BJ (cell line): ENCODE measurements at regions of chr2 and their contacts with region 1.

Region 1: DNA sequence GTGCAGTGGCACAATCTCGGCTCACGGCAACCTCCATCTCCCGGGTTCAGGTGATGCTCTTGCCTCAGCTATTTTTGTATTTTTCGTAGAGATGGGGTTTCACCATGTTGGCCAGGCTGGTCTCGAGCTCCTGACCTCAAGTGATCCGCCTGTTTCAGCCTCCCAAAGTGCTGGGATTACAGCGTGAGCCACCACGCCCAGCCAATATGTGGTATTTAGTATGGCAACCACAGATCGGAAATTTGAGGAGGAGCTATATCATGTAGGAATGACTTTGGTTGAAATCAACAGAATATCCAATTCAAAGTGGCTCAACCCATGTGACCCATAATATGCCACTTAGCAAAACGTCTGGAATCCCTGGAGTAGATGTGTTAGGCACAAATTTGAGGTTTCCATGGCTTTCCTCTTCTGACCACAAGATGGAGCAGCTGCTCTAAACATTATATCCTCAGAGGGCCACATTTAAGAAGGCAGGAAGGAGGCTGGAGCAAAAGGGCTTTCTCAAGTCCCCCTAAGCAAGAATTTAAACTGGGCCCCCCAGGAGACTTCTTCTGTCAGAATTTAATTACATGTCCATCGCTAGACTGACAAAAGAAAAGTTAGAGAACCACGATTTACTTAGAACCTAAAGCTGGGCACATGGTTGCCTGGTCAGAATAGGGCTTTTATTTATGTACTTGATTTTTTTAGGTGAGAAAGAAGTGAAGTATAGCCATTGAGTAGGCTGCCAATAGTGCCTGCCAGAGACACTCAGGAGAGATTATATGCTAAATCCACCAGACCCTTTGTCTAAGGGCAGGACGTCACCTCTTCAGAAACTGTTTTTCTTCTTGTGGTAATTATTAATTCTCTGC is 49.6 kb upstream of the ITSN2 start:
- DNase-seq: no peak
- H3K4me3 ChIP-seq: no peak overlapping the region
- H3K27me3 ChIP-seq: no peaks in the 10 kb centered on the region
- CTCF ChIP-seq: peak; percentile 81

Region 2: GRCh38 chr2:24421668-24422067 is 11.7 kb after region 1 on chr2:
- CTCF ChIA-PET with region 1: interaction called, 17 read pairs
- POLR2A ChIA-PET with region 1: no interaction called
- DNase-seq: no peak
- H3K4me3 ChIP-seq: no peak overlapping the region
- H3K27me3 ChIP-seq: peaks cover 3% of the 10 kb centered on the region
- CTCF ChIP-seq: peak; percentile 55

Region 3: DNA sequence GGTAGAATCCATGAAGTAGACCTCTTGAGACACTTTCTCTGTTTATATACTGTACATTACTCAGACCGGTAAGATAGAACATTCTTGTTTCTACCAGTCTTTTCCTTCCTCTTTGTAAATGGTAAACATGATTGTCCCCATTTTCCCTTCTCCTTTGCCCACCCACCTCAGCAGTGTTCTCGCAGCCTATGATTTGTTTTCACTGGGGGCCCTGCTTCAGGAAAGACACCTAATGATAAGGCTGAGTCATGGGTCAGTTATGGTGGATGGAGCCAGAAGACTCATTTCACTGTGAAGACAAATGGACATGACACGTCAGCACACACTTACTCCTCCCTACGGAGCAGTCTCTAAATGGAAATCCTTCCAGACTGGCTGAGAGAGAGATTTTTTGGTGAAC is 407.0 kb after region 1 on chr2:
- CTCF ChIA-PET with region 1: interaction called, 20 read pairs
- POLR2A ChIA-PET with region 1: no interaction called
- DNase-seq: no peak
- H3K4me3 ChIP-seq: no peak overlapping the region
- H3K27me3 ChIP-seq: no peaks in the 10 kb centered on the region
- CTCF ChIP-seq: no peak

Region 4: DNA sequence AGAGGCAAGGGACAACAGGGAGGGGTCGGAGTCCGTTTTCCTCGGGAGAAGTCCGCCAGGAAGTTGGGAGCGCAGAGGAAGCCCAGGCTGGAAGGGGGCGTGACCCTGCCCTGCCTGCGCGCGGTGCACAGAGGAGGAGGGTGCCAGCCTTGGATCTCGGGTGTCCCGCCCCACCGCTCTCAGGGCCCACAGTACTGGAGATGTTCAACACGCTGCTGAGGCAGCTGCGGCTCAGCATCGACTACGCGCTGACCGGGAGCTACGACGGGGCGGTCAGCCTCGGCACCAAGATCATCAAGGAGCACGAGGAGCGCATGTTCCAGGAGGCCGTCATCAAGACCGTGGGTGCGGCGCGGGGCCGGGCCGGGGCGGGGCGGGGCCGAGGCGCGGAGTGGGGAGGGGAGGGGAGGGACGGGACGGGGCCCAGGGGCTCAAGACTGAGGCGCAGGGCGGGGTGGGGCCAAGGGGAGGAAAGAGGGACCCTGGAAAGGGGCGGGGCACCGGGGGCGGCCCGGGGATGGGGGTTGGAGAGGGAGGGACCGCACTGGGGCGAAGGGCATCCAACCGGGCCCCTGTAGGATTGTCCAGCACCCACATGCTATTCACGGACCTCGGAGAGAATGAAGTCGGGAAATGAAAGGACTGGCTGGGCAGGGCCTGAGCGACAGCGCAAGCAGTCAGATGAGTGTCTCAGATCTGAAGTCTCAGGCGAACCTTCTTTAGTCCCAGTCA is 721.8 kb after region 1 on chr2:
- CTCF ChIA-PET with region 1: interaction called, 13 read pairs
- POLR2A ChIA-PET with region 1: no interaction called
- DNase-seq: no peak
- H3K4me3 ChIP-seq: no peak overlapping the region
- H3K27me3 ChIP-seq: peaks cover under 1% of the 10 kb centered on the region; the same call in 1 of the 2 replicates
- CTCF ChIP-seq: no peak